MCF 10A (cell line): ENCODE measurements at regions of chr4 and their contacts with region 1.

Region 1: DNA sequence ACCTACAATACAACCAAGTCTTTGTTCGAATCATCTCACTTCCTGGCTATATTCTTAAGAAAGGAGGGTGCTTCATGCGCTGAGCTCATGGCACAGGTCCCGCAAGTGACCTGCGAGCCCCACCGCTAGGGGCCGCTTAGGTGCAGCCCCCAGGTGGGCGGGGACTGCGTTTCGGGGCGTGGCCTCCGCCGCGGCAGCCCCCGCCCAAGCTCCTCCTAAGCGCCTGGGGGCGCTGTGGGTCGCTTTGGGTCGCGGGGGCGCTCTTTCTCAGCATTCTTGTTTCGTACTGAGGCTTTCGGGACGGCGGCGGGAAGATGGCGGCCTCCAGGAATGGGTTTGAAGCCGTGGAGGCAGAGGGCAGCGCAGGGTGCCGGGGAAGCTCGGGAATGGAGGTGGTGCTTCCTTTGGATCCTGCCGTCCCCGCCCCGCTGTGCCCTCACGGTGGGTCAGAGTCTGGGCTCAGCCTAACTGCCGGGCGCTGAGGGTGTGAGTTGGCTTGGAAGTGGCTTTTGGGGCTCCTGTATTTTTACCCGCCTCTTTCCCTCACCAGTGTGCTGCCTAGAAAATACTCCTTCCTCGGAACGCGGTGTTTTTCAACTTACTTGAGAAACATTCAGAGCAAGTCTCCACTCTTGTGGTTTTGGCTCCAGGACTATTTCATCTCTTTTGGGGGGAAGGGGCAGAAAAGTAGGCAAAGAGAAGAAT is at the start of gene ZCCHC4:
- DNase-seq: peak; percentile 90
- H3K4me3 Mint-ChIP-seq: peak within 1 kb of the TSS; percentile 99
- H3K27ac Mint-ChIP-seq: peak within 1 kb of the TSS; percentile 99
- H3K4me1 Mint-ChIP-seq: no peaks in the 10 kb centered on the region
- H3K27me3 Mint-ChIP-seq: no peaks in the 10 kb centered on the region
- CTCF ChIP-seq: peak; percentile 92
- total RNA-seq, gene ZCCHC4: 7.7 and 9.7 TPM in 2 replicates

Region 2: DNA sequence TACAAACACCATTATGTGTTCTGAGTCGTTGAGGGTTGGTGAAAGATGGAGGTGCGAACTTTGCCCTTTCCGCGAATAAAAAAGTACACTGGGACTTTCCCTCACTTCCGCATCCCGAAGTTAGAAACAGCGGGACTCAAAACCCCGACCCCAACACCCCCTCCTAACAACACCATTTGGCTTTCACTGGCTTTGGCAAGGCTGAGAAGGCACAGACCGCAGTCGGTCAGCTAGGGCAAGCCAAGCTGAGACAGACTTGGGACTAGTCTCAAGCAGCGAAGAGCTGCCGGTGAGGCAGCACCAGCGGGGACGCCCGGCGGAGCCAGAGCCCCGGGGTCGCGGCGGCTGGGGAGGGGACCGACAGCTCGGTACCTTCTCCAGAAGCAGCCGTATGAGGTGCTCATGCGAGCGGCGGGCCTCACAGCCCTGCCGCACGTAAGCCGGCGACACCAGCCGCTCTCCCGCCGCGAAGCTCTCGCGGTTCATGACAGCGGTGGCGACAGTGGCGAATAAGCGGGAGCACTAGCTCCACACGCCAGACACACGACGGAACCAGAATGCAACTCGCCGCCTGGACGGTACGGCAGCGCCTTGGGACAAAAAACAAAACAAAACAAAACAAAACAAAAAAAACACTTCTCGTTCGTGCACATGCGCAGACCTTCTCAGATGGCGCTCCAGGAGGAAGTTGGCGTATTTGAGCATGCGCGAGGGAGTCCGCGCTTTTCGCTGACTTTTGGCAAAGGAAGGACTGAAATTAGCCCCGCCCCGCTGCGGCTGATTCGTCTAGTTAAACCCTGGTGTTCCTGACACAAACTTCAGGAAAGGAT is 152.5 kb before region 1 on chr4 and contains the start of gene SEPSECS:
- CTCF ChIA-PET with region 1: interaction called, 5 read pairs
- POLR2A ChIA-PET with region 1: interaction called, 17 read pairs
- intact Hi-C with region 1: loop called (anchors 2 kb)
- DNase-seq: peak; percentile 98
- H3K4me3 Mint-ChIP-seq: peak within 1 kb of the TSS; percentile 93
- H3K27ac Mint-ChIP-seq: peak within 1 kb of the TSS; percentile 87
- H3K4me1 Mint-ChIP-seq: peaks cover 17% of the 10 kb centered on the region
- H3K27me3 Mint-ChIP-seq: no peaks in the 10 kb centered on the region
- CTCF ChIP-seq: no peak
- total RNA-seq, gene SEPSECS: 9.4 and 9.7 TPM in 2 replicates

Region 3: DNA sequence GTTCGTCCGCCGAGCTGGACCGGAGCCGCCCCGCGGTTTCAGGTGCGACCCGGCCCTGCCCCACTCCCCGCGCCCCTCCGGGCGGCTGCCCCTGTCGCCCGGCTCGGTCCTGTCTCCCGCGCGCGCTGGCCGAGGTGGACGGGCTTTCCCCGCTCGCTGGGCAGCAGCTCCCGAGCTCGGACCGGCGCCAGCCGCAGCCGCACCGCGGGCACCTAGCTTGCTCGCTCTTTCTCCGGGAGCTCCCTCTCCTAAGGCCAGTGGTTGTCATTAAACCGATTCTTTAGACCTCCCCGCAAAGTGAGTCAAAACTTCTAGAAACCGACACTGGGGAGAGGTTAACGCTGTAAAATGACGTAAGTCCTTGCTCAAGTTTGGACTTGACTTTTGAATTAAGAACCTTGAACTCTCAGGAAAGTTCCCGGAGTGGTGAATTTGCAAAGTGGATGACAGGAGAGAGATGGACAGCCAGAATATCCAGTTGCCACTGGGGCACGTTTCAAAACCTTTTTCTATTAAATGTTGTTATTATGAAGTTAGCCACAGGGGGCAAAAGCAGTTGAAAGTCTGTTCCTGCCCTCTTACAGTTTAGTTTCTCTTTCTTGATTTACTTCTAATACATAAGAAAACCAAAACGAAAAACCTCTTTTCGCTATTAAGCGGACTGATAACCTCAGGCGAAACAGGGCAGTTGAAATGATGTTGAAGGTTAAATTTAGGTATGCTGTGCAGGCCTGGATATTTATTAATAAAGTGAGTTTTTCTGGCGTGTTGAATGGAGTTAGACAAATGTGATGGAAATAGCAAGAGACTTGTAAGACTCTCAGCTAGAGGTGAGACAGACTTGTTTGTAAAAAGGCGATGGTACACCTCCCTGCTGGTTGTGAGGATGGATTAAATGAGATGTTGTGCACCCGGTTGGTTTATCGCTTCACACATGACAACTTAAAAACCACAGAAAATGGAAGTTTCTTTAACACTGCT is 78.0 kb before region 1 on chr4:
- CTCF ChIA-PET with region 1: interaction called, 56 read pairs
- POLR2A ChIA-PET with region 1: interaction called, 42 read pairs
- intact Hi-C with region 1: loop called (anchors 2 kb)
- DNase-seq: peak; percentile 92
- H3K4me3 Mint-ChIP-seq: peak overlapping the region; percentile 86
- H3K27ac Mint-ChIP-seq: peak overlapping the region; percentile 90
- H3K4me1 Mint-ChIP-seq: peaks cover 10% of the 10 kb centered on the region
- H3K27me3 Mint-ChIP-seq: no peaks in the 10 kb centered on the region
- CTCF ChIP-seq: peak; percentile 44

Region 4: GRCh38 chr4:25290490-25291067 is 22.1 kb before region 1 on chr4:
- CTCF ChIA-PET with region 1: interaction called, 13 read pairs
- POLR2A ChIA-PET with region 1: interaction called, 5 read pairs
- intact Hi-C with region 1: no loop called
- DNase-seq: no peak
- H3K4me3 Mint-ChIP-seq: no peak overlapping the region
- H3K27ac Mint-ChIP-seq: no peak overlapping the region
- H3K4me1 Mint-ChIP-seq: no peaks in the 10 kb centered on the region
- H3K27me3 Mint-ChIP-seq: no peaks in the 10 kb centered on the region
- CTCF ChIP-seq: no peak

Region 5: DNA sequence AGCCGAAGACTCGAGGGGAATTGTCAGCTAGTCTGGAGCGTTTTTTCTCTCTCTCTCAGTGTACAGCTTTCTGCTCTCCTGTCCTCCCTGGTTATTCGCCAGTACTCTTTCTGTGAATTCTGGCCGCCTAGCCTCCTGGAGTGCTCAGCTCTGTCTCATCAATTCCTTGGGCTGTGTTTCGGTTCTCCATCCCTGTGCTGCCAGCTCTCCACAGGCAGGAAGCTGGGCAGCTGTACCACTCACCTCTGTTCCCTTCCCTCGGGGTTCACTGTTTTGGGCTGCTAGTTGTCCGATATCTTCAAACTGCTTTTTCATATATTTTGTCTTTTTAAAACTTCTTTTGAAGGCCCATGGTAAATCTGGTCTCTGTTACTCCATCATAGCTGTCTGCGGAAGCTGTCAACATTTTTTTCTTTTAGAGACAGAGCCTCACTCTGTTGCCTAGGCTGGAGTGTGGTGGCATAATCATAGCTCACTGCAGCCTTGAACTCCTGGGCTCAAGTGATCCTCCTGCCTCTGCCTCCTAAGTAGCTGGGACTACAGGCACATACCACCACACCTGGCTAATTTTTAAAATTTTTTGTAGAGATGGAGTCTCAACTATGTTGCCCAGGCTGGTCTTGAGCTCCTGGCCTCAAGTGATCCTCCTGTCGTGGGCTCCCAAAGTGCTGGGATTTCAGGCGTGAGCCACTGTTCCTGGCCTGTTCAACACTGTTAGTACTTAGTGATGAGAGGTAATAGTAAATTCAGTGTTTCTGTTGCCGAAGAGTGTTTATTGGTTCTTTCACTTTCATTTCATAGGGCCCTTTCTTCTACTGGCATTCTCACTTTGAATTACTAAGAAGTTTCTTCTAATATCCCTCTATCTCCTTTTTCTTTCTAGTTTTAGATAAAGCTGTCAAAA is 18.5 kb after region 1 on chr4:
- CTCF ChIA-PET with region 1: interaction called, 24 read pairs
- POLR2A ChIA-PET with region 1: interaction called, 7 read pairs
- intact Hi-C with region 1: no loop called
- DNase-seq: no peak
- H3K4me3 Mint-ChIP-seq: no peak overlapping the region
- H3K27ac Mint-ChIP-seq: no peak overlapping the region
- H3K4me1 Mint-ChIP-seq: no peaks in the 10 kb centered on the region
- H3K27me3 Mint-ChIP-seq: no peaks in the 10 kb centered on the region
- CTCF ChIP-seq: no peak

Region 6: GRCh38 chr4:25367004-25367621 is 54.5 kb after region 1 on chr4:
- CTCF ChIA-PET with region 1: interaction called, 34 read pairs
- POLR2A ChIA-PET with region 1: interaction called, 7 read pairs
- intact Hi-C with region 1: loop called (anchors 5 kb)
- DNase-seq: peak; percentile 58
- H3K4me3 Mint-ChIP-seq: no peak overlapping the region
- H3K27ac Mint-ChIP-seq: no peak overlapping the region
- H3K4me1 Mint-ChIP-seq: no peaks in the 10 kb centered on the region
- H3K27me3 Mint-ChIP-seq: no peaks in the 10 kb centered on the region
- CTCF ChIP-seq: peak; percentile 59

Region 7: GRCh38 chr4:27010334-27010940 is 1697.8 kb after region 1 on chr4:
- CTCF ChIA-PET with region 1: no interaction called
- POLR2A ChIA-PET with region 1: no interaction called
- intact Hi-C with region 1: no loop called
- DNase-seq: peak; percentile 59
- H3K4me3 Mint-ChIP-seq: no peak overlapping the region
- H3K27ac Mint-ChIP-seq: peak overlapping the region; percentile 39
- H3K4me1 Mint-ChIP-seq: no peaks in the 10 kb centered on the region
- H3K27me3 Mint-ChIP-seq: no peaks in the 10 kb centered on the region
- CTCF ChIP-seq: peak; percentile 71